ENCODE measurements at regions of chr7 and their contacts with region 1.

Region 1: GRCh38 chr7:151080522-151081169 is at the start of gene FASTK:
- DNase-seq: peak; percentile 79 to 89 (median 87)
- ATAC-seq: peak; percentile 85
- H3K4me3 ChIP-seq: peak within 1 kb of the TSS; percentile 86
- H3K4me3 Mint-ChIP-seq: peak within 1 kb of the TSS; percentile 87 to 97 (median 88)
- H3K27ac ChIP-seq: peak within 1 kb of the TSS; percentile 93
- H3K27ac Mint-ChIP-seq: peak within 1 kb of the TSS; percentile 72 to 92 (median 88)
- H3K4me1 ChIP-seq: peaks cover 41 to 44% of the 10 kb centered on the region in 2 donors
- H3K4me1 Mint-ChIP-seq: peaks cover 21 to 52% (median 39%) of the 10 kb centered on the region in 7 donors
- H3K27me3 ChIP-seq: no peaks in the 10 kb centered on the region
- H3K27me3 Mint-ChIP-seq: peaks cover 0 to 12% (median 0%) of the 10 kb centered on the region in 5 donors
- total RNA-seq, gene FASTK: 94.1 to 136 (median 101) TPM

Region 2: DNA sequence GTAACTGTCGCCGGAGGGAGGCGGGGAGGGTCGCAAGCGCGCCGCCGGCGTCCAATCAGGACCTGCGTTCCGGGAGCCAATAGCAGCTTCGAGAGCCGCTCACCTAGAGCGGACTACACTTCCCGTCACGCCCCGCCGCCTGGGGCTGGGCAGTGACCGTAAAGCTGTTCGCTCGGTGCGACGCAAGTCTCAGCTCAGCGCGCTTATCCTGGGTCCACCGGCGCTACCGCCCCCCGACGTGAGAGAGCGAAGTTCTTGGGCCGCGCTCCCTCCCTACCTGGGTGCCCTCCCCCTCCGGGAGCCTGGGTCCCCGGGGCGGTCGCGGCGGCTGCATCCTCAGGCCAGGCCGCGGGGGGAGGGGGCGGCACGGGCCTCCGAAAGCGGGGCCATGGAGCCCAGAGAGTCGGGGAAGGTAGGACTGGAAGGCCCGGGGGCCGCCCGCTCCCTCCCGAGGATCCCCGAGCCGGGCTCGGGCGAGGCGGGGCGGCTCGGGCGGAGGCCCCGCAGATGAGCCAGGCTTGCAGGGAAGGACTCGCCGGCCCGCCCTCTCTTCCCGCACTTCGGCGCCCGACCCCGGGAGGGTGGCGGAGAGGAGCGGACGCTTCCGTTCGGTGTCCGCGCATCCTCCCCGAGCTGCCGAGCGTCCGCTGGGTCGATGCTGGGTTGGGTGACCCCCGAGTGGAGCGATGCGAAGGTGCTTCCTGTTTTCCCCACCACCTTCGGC is 1242.3 kb before region 1 on chr7 and contains the start of gene ZNF862:
- CTCF ChIA-PET with region 1: no interaction called
- POLR2A ChIA-PET with region 1: no interaction called
- intact Hi-C with region 1: loop called in 1 of 2 experiments (anchors 10 kb)
- DNase-seq: peak; percentile 84 to 96 (median 94)
- ATAC-seq: peak; percentile 99
- H3K4me3 ChIP-seq: peak within 1 kb of the TSS; percentile 67
- H3K4me3 Mint-ChIP-seq: peak within 1 kb of the TSS; percentile 85 to 97 (median 91)
- H3K27ac ChIP-seq: peak within 1 kb of the TSS; percentile 79
- H3K27ac Mint-ChIP-seq: peak within 1 kb of the TSS; percentile 77 to 96 (median 88)
- H3K4me1 ChIP-seq: peaks cover 12 to 22% of the 10 kb centered on the region in 2 donors
- H3K4me1 Mint-ChIP-seq: peaks cover 25 to 52% (median 48%) of the 10 kb centered on the region in 7 donors
- H3K27me3 ChIP-seq: no peaks in the 10 kb centered on the region
- H3K27me3 Mint-ChIP-seq: peaks cover 0 to 15% (median 3%) of the 10 kb centered on the region in 5 donors
- total RNA-seq, gene ZNF862: 36.9 to 112 (median 41.8) TPM

Region 3: DNA sequence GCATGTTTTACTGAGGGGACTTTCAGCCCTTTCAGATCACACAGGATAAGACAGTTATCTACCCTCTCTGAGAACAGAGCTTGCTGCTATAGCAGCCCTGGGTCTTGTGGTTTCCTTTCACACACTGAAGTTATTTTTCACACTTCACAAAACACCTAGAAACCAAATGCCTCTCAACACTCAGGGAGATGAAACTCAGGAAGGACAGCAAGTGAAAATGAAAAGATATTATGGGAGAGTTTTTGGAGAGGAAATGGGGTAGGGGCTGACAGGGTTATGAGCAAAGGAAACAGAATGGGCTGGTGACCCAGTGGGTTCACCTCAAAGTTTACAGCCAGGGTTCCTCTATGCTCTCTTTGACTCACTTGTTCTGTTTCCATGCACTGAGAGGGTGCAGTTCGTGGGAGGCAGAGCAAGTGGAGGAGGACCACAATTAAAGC is 412.2 kb before region 1 on chr7:
- CTCF ChIA-PET with region 1: no interaction called
- POLR2A ChIA-PET with region 1: no interaction called
- intact Hi-C with region 1: loop called in 1 of 2 experiments (anchors 5 kb)
- DNase-seq: peak in 8 of 9 donors; percentile 66 to 87 (median 81)
- ATAC-seq: peak; percentile 88
- H3K4me3 ChIP-seq: peak overlapping the region; percentile 30
- H3K4me3 Mint-ChIP-seq: peak overlapping the region; percentile 57 to 85 (median 72)
- H3K27ac ChIP-seq: peak overlapping the region; percentile 78
- H3K27ac Mint-ChIP-seq: peak overlapping the region; percentile 73 to 100 (median 97)
- H3K4me1 ChIP-seq: peaks cover 71 to 86% of the 10 kb centered on the region in 2 donors
- H3K4me1 Mint-ChIP-seq: peaks cover 58 to 99% (median 94%) of the 10 kb centered on the region in 7 donors
- H3K27me3 ChIP-seq: no peaks in the 10 kb centered on the region
- H3K27me3 Mint-ChIP-seq: no peaks in the 10 kb centered on the region

Region 4: GRCh38 chr7:150799741-150800580 is 280.7 kb before region 1 on chr7 and contains the start of gene TMEM176B:
- CTCF ChIA-PET with region 1: no interaction called
- POLR2A ChIA-PET with region 1: no interaction called
- intact Hi-C with region 1: no loop called
- DNase-seq: peak in 1 of 9 donors; percentile 9
- ATAC-seq: peak; percentile 50
- H3K4me3 ChIP-seq: no peak within 1 kb of the TSS
- H3K4me3 Mint-ChIP-seq: peak within 1 kb of the TSS; percentile 28 to 82 (median 70)
- H3K27ac ChIP-seq: no peak within 1 kb of the TSS
- H3K27ac Mint-ChIP-seq: peak within 1 kb of the TSS in 2 of 9 donors; percentile 29 to 38
- H3K4me1 ChIP-seq: peaks cover 0 to 15% of the 10 kb centered on the region in 2 donors
- H3K4me1 Mint-ChIP-seq: peaks cover 0 to 19% (median 11%) of the 10 kb centered on the region in 7 donors
- H3K27me3 ChIP-seq: peaks cover 0 to 14% of the 10 kb centered on the region in 2 donors
- H3K27me3 Mint-ChIP-seq: peaks cover 37 to 68% (median 45%) of the 10 kb centered on the region in 5 donors
- total RNA-seq, gene TMEM176B: 2.0 to 7.1 (median 2.8) TPM in 3 of 5 experiments, not detected in the others

Region 5: GRCh38 chr7:150988230-150989226 is 92.1 kb before region 1 on chr7:
- CTCF ChIA-PET with region 1: no interaction called
- POLR2A ChIA-PET with region 1: no interaction called
- intact Hi-C with region 1: no loop called
- DNase-seq: peak; percentile 49 to 72 (median 64)
- ATAC-seq: peak; percentile 79
- H3K4me3 ChIP-seq: peak overlapping the region; percentile 10
- H3K4me3 Mint-ChIP-seq: peak overlapping the region; percentile 37 to 83 (median 72)
- H3K27ac ChIP-seq: no peak overlapping the region
- H3K27ac Mint-ChIP-seq: peak overlapping the region in 6 of 9 donors; percentile 5 to 65 (median 26)
- H3K4me1 ChIP-seq: peaks cover 12 to 21% of the 10 kb centered on the region in 2 donors
- H3K4me1 Mint-ChIP-seq: peaks cover 19 to 43% (median 31%) of the 10 kb centered on the region in 7 donors
- H3K27me3 ChIP-seq: no peaks in the 10 kb centered on the region
- H3K27me3 Mint-ChIP-seq: peaks cover 0 to 34% (median 0%) of the 10 kb centered on the region in 5 donors

Region 6: GRCh38 chr7:151017953-151018420 is 62.7 kb before region 1 on chr7:
- CTCF ChIA-PET with region 1: interaction called, 4 read pairs
- POLR2A ChIA-PET with region 1: interaction called, 6 read pairs
- intact Hi-C with region 1: loop called in 1 of 2 experiments (anchors 1 kb)
- DNase-seq: peak; percentile 67 to 87 (median 75)
- ATAC-seq: peak; percentile 68
- H3K4me3 ChIP-seq: peak overlapping the region; percentile 65
- H3K4me3 Mint-ChIP-seq: peak overlapping the region; percentile 79 to 94 (median 88)
- H3K27ac ChIP-seq: peak overlapping the region; percentile 97
- H3K27ac Mint-ChIP-seq: peak overlapping the region; percentile 82 to 100 (median 94)
- H3K4me1 ChIP-seq: peaks cover 30 to 55% of the 10 kb centered on the region in 2 donors
- H3K4me1 Mint-ChIP-seq: peaks cover 35 to 67% (median 53%) of the 10 kb centered on the region in 7 donors
- H3K27me3 ChIP-seq: no peaks in the 10 kb centered on the region
- H3K27me3 Mint-ChIP-seq: peaks cover 0 to 35% (median 0%) of the 10 kb centered on the region in 5 donors

Region 7: DNA sequence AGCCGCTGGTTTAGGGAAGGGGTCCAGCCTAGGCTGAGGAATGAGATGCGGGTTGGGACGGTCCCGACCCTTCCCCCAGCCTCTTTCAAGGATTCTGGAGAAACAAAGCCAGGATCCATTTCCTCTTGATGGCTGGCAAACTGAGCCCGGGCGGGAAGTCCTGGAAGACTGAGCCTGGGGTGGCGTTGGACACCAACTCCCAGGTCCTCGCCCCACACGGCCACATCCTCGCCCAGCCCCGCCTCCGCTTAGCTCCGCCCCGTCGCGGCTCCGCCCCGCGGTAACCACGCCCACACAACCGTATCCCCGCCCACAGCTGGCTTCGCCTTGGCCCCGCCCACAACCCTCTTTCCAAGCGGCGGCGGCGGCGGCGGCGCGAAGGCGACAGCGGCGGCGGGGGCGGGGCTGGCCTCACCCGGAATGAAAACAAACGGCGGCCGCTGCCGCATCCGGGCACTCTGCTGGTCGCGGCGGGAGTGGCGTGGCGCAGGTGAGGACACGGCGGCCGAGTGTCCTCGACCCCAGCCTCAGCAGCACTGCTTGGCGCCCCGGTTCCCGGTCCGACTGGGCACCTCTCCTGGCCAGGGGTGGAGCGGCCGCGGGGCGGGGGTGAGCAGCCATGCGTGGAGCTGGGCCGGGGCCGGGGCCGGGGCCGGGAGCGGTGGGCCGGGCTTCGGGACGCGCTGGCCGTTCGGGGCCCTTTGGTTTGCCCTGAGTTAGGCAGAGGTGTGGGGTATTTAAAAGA is 260.9 kb after region 1 on chr7 and contains the start of gene NUB1:
- CTCF ChIA-PET with region 1: no interaction called
- POLR2A ChIA-PET with region 1: no interaction called
- intact Hi-C with region 1: loop called in 1 of 2 experiments (anchors 2 kb)
- DNase-seq: peak; percentile 79 to 99 (median 90)
- ATAC-seq: peak; percentile 98
- H3K4me3 ChIP-seq: peak within 1 kb of the TSS; percentile 84
- H3K4me3 Mint-ChIP-seq: peak within 1 kb of the TSS; percentile 84 to 91 (median 87)
- H3K27ac ChIP-seq: peak within 1 kb of the TSS; percentile 88
- H3K27ac Mint-ChIP-seq: peak within 1 kb of the TSS; percentile 83 to 96 (median 90)
- H3K4me1 ChIP-seq: peaks cover 19 to 21% of the 10 kb centered on the region in 2 donors
- H3K4me1 Mint-ChIP-seq: peaks cover 10 to 44% (median 33%) of the 10 kb centered on the region in 7 donors
- H3K27me3 ChIP-seq: no peaks in the 10 kb centered on the region
- H3K27me3 Mint-ChIP-seq: no peaks in the 10 kb centered on the region
- total RNA-seq, gene NUB1: 75.1 to 116 (median 82.0) TPM